HAP-1 (cell line): ENCODE measurements at regions of chr6 and their contacts with region 1.

Region 1: GRCh38 chr6:111030008-111031007 is 48.5 kb downstream of the RPF2 start:
- DNase-seq: no peak
- H3K4me3 ChIP-seq: no peak overlapping the region
- H3K4me1 ChIP-seq: no peaks in the 10 kb centered on the region
- H3K27me3 ChIP-seq: no peaks in the 10 kb centered on the region

Region 2: DNA sequence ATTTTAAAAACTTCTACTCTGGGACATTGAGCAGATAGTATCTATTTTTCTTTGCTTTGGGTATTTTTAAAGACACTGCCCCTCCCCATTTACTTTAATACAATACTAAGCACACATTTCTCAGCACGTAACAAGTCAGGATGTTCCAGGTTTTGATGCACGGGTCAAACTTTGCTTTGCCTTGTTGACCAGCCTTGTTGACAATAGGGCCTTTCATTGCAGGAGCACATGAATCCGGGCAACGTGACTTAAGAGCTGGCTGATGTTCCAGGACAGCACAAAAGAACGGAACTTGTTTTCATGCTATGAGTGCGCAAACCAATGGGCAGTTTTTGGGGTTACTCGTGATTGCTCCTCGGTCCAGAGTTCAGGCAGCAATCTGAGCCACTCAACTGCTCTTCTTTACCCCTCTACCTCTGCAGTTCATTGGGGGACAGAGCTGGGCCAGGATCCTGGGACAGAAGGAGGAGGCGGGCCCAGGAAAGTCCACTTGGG is 475.3 kb before region 1 on chr6:
- in situ Hi-C with region 1: no loop called
- DNase-seq: no peak
- H3K4me3 ChIP-seq: no peak overlapping the region
- H3K4me1 ChIP-seq: peaks cover 4% of the 10 kb centered on the region; the same call in 1 of the 2 replicates
- H3K27me3 ChIP-seq: no peaks in the 10 kb centered on the region

Region 3: GRCh38 chr6:110853754-110854477 is 176.4 kb before region 1 on chr6:
- in situ Hi-C with region 1: no loop called
- DNase-seq: no peak
- H3K4me3 ChIP-seq: no peak overlapping the region
- H3K4me1 ChIP-seq: no peaks in the 10 kb centered on the region; the same call in 1 of the 2 replicates
- H3K27me3 ChIP-seq: no peaks in the 10 kb centered on the region

Region 4: GRCh38 chr6:112043032-112044007 is 1013.0 kb after region 1 on chr6:
- in situ Hi-C with region 1: loop called (anchors 25 kb)
- DNase-seq: peak; percentile 93 to 97
- H3K4me3 ChIP-seq: peak overlapping the region; percentile 44
- H3K4me1 ChIP-seq: peaks cover 2% of the 10 kb centered on the region; the same call in 1 of the 2 replicates
- H3K27me3 ChIP-seq: no peaks in the 10 kb centered on the region